Heart left ventricle (tissue), 16 donors: ENCODE measurements at regions of chr1 and their contacts with region 1.

Region 1: DNA sequence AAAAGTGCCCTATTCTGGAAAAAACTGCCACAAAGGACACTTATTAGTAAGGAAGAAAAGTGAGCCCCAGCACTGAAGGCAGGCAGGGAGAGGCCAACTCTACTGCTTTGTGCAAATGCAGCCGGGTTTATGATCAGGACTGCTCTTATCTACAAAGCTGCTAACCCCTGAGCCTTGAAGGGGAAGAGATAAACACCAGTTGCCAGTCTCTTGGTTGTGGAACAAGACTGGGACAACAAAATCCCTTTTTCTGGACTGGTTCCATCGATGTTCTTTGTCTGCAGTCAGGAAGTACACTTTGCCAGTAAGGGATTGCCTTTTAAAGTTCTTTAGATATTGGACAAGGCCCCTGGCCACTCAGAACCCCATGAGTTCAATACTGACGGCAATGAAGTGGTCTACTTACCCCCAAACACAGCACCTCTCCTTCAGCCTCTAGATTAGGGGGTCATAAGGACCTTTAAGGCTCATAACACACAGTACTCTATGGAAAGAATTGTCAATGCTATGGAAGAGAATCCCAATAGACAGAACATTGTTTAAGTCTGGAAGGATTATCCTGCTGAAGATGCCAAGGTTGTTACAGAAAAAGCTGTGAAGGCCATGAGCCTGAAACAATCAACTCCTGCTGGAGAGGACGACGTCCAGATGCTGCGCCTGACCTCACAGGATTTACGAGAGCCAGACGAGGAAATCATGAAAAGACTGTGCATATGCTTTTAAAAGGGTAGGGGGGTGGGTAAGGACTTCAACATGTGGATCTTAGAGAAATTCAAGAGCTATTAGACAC is 43.6 kb downstream of the GNB1 start:
- DNase-seq: no peak
- ATAC-seq: peak; percentile 54 to 87 (median 68)
- H3K4me3 ChIP-seq: no peak overlapping the region
- H3K27ac ChIP-seq: peak overlapping the region in 11 of 12 donors; percentile 28 to 78 (median 57)
- H3K4me1 ChIP-seq: peaks cover 21 to 75% (median 60%) of the 10 kb centered on the region in 12 donors
- H3K27me3 ChIP-seq: no peaks in the 10 kb centered on the region
- CTCF ChIP-seq: no peak
- POLR2A ChIP-seq: no peak

Region 2: GRCh38 chr1:1630965-1631781 is 216.1 kb before region 1 on chr1:
- intact Hi-C with region 1: no loop called
- DNase-seq: peak; percentile 80 to 87 (median 83)
- ATAC-seq: peak in 3 of 4 donors; percentile 33 to 58 (median 53)
- H3K4me3 ChIP-seq: peak overlapping the region; percentile 23 to 57 (median 42)
- H3K27ac ChIP-seq: peak overlapping the region; percentile 47 to 94 (median 80)
- H3K4me1 ChIP-seq: peaks cover 0 to 25% (median 5%) of the 10 kb centered on the region in 12 donors
- H3K27me3 ChIP-seq: peaks cover 0 to 29% (median 8%) of the 10 kb centered on the region in 9 donors
- CTCF ChIP-seq: no peak
- POLR2A ChIP-seq: no peak

Region 3: GRCh38 chr1:1806890-1807289 is 40.4 kb before region 1 on chr1:
- intact Hi-C with region 1: loop called in 1 of 10 experiments (anchors 5 kb)
- DNase-seq: peak in 1 of 5 donors; percentile 12
- ATAC-seq: peak in 2 of 4 donors; percentile 57 to 65
- H3K4me3 ChIP-seq: no peak overlapping the region
- H3K27ac ChIP-seq: peak overlapping the region in 6 of 12 donors; percentile 14 to 42 (median 26)
- H3K4me1 ChIP-seq: peaks cover 0 to 14% (median 3%) of the 10 kb centered on the region in 12 donors
- H3K27me3 ChIP-seq: no peaks in the 10 kb centered on the region
- CTCF ChIP-seq: no peak
- POLR2A ChIP-seq: no peak

Region 4: DNA sequence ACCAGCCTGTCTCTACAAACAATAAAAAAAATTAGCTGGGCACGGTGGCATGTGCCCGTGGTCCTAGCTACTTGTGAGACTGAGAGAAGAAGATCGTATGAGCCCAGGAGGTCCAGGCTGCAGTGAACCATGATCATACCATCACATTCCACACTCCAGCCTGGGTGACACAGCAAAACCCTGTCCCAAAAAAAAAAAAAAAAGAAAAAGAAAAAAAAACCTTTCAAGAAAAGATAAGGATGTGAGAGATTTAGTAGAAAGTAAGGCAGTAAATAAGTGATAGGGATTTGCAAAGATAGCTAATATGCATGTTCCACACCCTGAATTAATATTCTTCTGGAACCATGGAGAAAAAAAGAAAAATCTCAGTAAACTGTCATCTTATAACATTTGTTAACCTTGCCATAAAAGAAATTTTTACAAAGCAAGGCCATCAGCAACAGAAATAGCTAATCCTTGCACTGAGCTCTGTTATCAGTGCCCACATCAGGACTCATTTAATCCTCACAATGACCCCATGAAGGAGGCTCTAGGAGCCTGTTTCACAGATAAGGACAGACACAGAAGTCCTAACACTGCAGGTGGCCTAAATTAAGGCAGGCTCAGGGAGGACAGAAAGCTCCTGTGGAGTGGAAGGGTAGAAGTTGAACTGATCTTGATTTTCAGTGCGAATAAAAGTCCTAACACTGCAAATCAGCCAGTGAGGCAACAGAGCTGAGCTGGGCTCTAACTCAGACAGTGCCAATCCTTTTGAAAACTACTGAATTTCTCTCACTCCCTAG is 36.0 kb after region 1 on chr1:
- intact Hi-C with region 1: loop called in 3 of 10 experiments (anchors 5 kb)
- DNase-seq: no peak
- ATAC-seq: peak in 2 of 4 donors; percentile 20 to 25
- H3K4me3 ChIP-seq: peak overlapping the region in 1 of 12 donors; percentile 23
- H3K27ac ChIP-seq: peak overlapping the region in 3 of 12 donors; percentile 25 to 33 (median 32)
- H3K4me1 ChIP-seq: peaks cover 14 to 99% (median 85%) of the 10 kb centered on the region in 12 donors
- H3K27me3 ChIP-seq: no peaks in the 10 kb centered on the region
- CTCF ChIP-seq: no peak
- POLR2A ChIP-seq: no peak